AG04449 (cell line): ENCODE measurements at regions of chr9 and their contacts with region 1.

Region 1: GRCh38 chr9:134449221-134449894 is 123.1 kb downstream of the RXRA start:
- DNase-seq: peak; percentile 74
- H3K4me3 ChIP-seq: no peak overlapping the region
- CTCF ChIP-seq: peak; percentile 98

Region 2: GRCh38 chr9:134502809-134503211 is 53.5 kb after region 1 on chr9:
- CTCF ChIA-PET with region 1: interaction called, 10 read pairs
- POLR2A ChIA-PET with region 1: no interaction called
- DNase-seq: peak; percentile 96
- H3K4me3 ChIP-seq: no peak overlapping the region
- CTCF ChIP-seq: no peak

Region 3: GRCh38 chr9:134648701-134649535 is 199.6 kb after region 1 on chr9:
- CTCF ChIA-PET with region 1: interaction called, 26 read pairs
- POLR2A ChIA-PET with region 1: interaction called, 10 read pairs
- DNase-seq: no peak
- H3K4me3 ChIP-seq: no peak overlapping the region; the same call in 1 of the 2 replicates
- CTCF ChIP-seq: no peak

Region 4: GRCh38 chr9:134681061-134681661 is 231.8 kb after region 1 on chr9:
- CTCF ChIA-PET with region 1: interaction called, 16 read pairs
- POLR2A ChIA-PET with region 1: no interaction called
- DNase-seq: no peak
- H3K4me3 ChIP-seq: no peak overlapping the region
- CTCF ChIP-seq: no peak

Region 5: GRCh38 chr9:134707031-134707680 is 257.8 kb after region 1 on chr9:
- CTCF ChIA-PET with region 1: interaction called, 13 read pairs
- POLR2A ChIA-PET with region 1: no interaction called
- DNase-seq: peak; percentile 45
- H3K4me3 ChIP-seq: no peak overlapping the region
- CTCF ChIP-seq: no peak

Region 6: DNA sequence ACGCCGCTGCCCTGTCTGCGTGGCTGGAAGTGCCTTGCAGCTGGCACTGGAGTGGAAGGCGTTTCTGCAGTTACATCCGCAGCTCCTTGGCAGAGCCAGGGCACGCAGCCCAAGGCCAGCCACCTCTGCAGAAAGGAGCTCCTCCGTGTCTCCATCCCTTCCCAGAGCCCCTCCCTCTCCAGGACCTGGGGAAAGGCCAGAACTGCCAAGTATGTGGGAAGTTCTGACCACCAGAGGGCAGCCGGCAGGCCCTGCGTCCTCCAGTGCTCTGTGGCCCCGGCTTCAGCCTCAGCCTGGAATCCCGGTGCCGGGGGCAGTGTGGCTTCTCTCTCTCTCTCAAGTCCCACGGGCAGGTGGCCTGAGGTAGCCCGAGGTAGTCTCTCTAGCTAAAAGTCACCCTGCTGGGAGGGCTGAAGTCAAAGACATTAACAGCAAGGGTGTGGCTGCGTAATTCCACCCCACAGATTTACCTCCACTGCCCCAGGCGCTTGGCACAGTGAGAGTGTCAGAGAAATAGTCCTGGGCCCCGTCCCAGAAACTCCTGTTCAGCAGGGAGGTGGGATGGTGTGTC is 329.6 kb after region 1 on chr9:
- CTCF ChIA-PET with region 1: interaction called, 28 read pairs
- POLR2A ChIA-PET with region 1: no interaction called
- DNase-seq: no peak
- H3K4me3 ChIP-seq: no peak overlapping the region
- CTCF ChIP-seq: peak; percentile 59